ENCODE measurements at regions of chr19 and their contacts with region 1.

Region 1: GRCh38 chr19:1183534-1184172 is 9.6 kb upstream of the SBNO2 start:
- DNase-seq: peak; percentile 76 to 87
- H3K4me3 ChIP-seq: peak overlapping the region in 1 of 3 donors; percentile 37
- H3K27ac ChIP-seq: peak overlapping the region; percentile 88 to 91
- H3K4me1 ChIP-seq: peaks cover 0 to 7% of the 10 kb centered on the region in 2 donors
- H3K27me3 ChIP-seq: no peaks in the 10 kb centered on the region
- CTCF ChIP-seq: no peak
- POLR2A ChIP-seq: no peak

Region 2: GRCh38 chr19:1046836-1047695 is 136.6 kb before region 1 on chr19:
- intact Hi-C with region 1: no loop called
- DNase-seq: no peak
- H3K4me3 ChIP-seq: no peak overlapping the region
- H3K27ac ChIP-seq: no peak overlapping the region
- H3K4me1 ChIP-seq: no peaks in the 10 kb centered on the region
- H3K27me3 ChIP-seq: no peaks in the 10 kb centered on the region
- CTCF ChIP-seq: no peak
- POLR2A ChIP-seq: no peak

Region 3: DNA sequence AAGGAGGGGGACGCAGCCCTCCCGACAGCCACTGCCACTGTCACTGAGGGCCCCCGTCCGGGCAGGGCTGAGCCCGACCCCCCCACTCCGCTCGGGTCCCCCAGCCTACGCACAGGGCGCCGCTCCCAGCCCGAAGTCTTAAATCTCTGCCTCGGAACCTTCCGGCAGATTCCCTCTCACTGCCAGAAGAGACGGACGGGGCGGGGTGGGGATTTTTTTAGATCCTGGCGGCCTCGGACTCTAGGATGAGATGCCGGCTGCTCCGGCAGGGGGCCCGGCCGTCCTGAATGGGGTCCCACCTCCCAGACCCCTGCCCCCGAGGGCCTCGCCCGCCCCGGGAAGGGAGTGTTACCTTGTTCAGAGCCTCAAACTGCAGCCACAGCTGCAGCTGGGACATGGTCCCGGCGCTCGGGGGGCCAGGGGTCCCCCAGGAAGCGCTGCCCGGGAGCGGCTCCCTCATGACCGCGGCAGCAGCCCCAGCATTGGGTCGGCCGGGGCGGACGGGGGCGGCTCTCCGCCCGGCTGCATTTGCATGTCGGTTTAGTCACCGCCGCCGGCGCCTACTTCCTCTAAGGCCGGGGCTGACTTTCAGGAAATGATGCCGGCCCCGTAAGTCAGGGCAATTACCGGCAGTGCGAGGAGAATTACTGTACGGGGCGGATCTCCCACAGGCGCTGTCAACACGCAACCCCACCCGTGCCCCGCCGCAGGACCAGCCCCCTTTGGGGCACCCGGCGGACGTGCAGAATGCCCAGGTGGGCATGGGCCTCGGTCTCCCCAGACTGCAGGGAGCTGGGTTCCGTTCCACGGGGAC is 51.7 kb before region 1 on chr19:
- intact Hi-C with region 1: loop called (anchors 10 kb)
- DNase-seq: peak; percentile 82 to 85
- H3K4me3 ChIP-seq: peak overlapping the region; percentile 64 to 100 (median 70)
- H3K27ac ChIP-seq: peak overlapping the region; percentile 86 to 99
- H3K4me1 ChIP-seq: peaks cover 29 to 45% of the 10 kb centered on the region in 2 donors
- H3K27me3 ChIP-seq: no peaks in the 10 kb centered on the region
- CTCF ChIP-seq: peak; percentile 16 to 32 (median 24)
- POLR2A ChIP-seq: no peak

Region 4: DNA sequence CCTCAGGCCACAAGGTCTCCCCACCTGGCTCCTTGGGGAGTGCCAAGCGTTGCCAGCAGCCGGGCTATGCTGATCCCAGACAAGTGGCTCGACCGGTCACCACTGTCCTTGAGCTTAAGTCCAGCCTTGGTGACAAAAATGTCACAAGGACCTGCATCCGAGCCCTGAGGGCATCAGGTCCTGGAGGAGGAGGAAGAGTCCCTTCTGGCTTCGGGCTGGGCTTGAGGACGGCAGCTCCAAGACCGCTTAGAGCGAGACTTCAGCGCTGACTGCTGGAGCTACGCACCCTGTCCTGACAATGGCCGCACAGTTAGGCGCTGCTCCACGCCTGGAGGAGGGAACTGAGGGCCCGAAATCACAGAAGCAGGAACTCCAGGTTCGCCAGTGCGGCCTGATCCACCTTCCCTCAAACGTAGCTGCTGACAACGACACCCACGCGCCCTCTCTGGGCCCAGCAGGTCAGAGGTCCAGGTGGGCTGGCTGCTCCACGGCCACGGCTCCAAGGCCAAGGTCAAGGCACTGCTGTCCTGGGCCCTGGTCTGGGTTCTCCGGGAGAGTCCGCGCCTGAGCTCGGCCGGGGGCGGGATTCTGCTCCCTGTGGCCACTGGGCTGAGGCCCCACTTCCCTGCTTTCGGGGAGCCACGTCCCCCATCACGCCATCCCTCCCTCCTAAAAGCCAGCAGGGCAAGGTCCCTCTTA is 16.6 kb before region 1 on chr19:
- intact Hi-C with region 1: loop called (anchors 1 kb)
- DNase-seq: peak; percentile 61 to 67
- H3K4me3 ChIP-seq: peak overlapping the region in 2 of 3 donors; percentile 46 to 91
- H3K27ac ChIP-seq: peak overlapping the region; percentile 87 to 99
- H3K4me1 ChIP-seq: peaks cover 33 to 48% of the 10 kb centered on the region in 2 donors
- H3K27me3 ChIP-seq: no peaks in the 10 kb centered on the region
- CTCF ChIP-seq: no peak
- POLR2A ChIP-seq: no peak

Region 5: GRCh38 chr19:1213391-1214286 is 30.0 kb after region 1 on chr19:
- intact Hi-C with region 1: loop called (anchors 2 kb)
- DNase-seq: peak in 1 of 2 donors; percentile 41
- H3K4me3 ChIP-seq: peak overlapping the region in 2 of 3 donors; percentile 13 to 52
- H3K27ac ChIP-seq: peak overlapping the region; percentile 69 to 94
- H3K4me1 ChIP-seq: peaks cover 16 to 36% of the 10 kb centered on the region in 2 donors
- H3K27me3 ChIP-seq: no peaks in the 10 kb centered on the region
- CTCF ChIP-seq: no peak
- POLR2A ChIP-seq: no peak

Measured in breast epithelium (tissue), 4 donors.